ENCODE measurements at regions of chr14 and their contacts with region 1.

Region 1: GRCh38 chr14:27506276-27506675 is 908.4 kb upstream of the NOVA1 start:
- DNase-seq: no peak
- H3K4me3 ChIP-seq: no peak overlapping the region
- H3K27ac ChIP-seq: no peak overlapping the region
- H3K4me1 ChIP-seq: no peaks in the 10 kb centered on the region
- H3K27me3 ChIP-seq: no peaks in the 10 kb centered on the region
- CTCF ChIP-seq: no peak

Region 2: GRCh38 chr14:26820138-26820537 is 686.1 kb before region 1 on chr14:
- CTCF ChIA-PET with region 1: no interaction called
- POLR2A ChIA-PET with region 1: no interaction called
- intact Hi-C with region 1: loop called (anchors 10 kb)
- DNase-seq: peak in 1 of 2 experiments; percentile 64
- H3K4me3 ChIP-seq: peak overlapping the region; percentile 22; the same call in 1 of the 2 replicates
- H3K27ac ChIP-seq: peak overlapping the region; percentile 71
- H3K4me1 ChIP-seq: peaks cover 26% of the 10 kb centered on the region
- H3K27me3 ChIP-seq: no peaks in the 10 kb centered on the region
- CTCF ChIP-seq: no peak

Region 3: DNA sequence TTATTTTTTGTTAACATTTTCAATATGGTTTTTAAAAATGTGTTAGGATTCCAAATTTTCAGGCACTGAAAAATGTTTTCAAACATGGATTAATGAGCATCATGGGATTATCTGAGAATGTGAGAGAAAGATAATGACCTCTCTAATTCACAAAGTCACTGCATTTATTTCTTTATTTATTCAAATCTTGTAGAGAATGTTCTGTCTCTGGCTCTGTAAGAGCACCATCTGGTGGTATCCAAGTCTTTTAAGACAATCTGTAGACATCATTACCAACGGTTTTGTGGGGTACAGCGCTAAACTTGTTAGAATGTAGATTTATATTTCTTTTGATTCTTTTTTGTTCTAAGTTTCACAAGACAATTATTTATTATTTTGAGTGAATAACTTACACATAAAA is 47.5 kb after region 1 on chr14:
- CTCF ChIA-PET with region 1: no interaction called
- POLR2A ChIA-PET with region 1: no interaction called
- intact Hi-C with region 1: no loop called
- DNase-seq: no peak
- H3K4me3 ChIP-seq: no peak overlapping the region
- H3K27ac ChIP-seq: no peak overlapping the region
- H3K4me1 ChIP-seq: no peaks in the 10 kb centered on the region
- H3K27me3 ChIP-seq: no peaks in the 10 kb centered on the region
- CTCF ChIP-seq: peak; percentile 31; the same call in 1 of the 2 replicates